Caco-2 (cell line): ENCODE measurements at regions of chr20 and their contacts with region 1.

Region 1: GRCh38 chr20:34363062-34363464 is at the start of gene ITCH:
- DNase-seq: peak; percentile 99
- H3K4me3 ChIP-seq: peak within 1 kb of the TSS; percentile 93
- H3K4me3 Mint-ChIP-seq: peak within 1 kb of the TSS; percentile 81
- H3K27ac Mint-ChIP-seq: peak within 1 kb of the TSS; percentile 96
- H3K4me1 ChIP-seq: peaks cover 26% of the 10 kb centered on the region
- H3K4me1 Mint-ChIP-seq: peaks cover 23% of the 10 kb centered on the region
- H3K27me3 ChIP-seq: no peaks in the 10 kb centered on the region
- H3K27me3 Mint-ChIP-seq: no peaks in the 10 kb centered on the region
- CTCF ChIP-seq: no peak
- total RNA-seq, gene ITCH: 135 and 138 TPM in 2 replicates

Region 2: DNA sequence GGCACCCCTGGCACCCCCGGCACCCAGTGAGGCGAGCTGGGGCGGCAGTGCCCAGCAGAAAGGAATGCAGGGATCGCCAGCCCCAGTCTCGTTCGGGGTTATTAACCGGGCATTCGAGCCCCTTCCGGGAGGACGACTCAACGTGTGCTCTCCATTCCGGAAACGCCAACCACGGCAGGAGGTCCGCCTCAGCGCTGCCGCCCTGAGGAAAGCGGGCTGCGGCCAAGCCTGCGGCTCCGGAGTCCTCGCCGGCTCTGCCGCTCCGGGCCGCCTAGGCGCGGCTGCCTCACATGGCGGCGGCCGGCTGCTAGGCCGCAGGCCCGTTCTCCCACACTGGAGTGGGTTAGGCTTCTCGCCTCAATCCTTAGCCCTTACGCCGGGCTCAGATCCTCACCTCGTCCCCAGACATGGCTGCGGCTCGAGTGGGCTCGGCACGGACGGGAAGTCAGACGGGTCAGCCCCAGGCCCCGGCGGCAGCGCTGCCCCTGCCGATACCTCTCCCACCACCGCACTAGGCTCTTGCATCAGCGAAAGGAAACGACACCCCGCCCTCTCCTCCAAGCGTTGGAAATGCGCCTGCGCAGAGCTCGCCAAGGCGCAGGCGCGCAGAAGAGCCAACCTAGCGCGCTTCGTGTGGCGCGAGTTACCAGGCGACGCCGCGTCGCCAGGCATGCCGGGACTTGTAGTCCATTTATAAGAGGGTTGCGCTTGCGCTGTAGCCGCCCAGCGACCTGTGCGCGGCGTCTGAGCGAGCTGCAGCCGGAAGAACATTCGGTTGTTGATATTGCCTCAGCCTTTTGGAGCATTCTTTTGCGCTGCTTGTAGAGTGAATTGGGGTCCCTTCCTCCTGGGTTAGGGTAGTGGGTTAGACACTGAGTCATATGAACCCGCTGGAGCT is 251.1 kb before region 1 on chr20 and contains the start of gene EIF2S2:
- CTCF ChIA-PET with region 1: no interaction called
- POLR2A ChIA-PET with region 1: interaction called, 14 read pairs
- intact Hi-C with region 1: no loop called
- DNase-seq: peak; percentile 100
- H3K4me3 ChIP-seq: peak within 1 kb of the TSS; percentile 98
- H3K4me3 Mint-ChIP-seq: peak within 1 kb of the TSS; percentile 77
- H3K27ac Mint-ChIP-seq: peak within 1 kb of the TSS; percentile 99
- H3K4me1 ChIP-seq: peaks cover 8% of the 10 kb centered on the region
- H3K4me1 Mint-ChIP-seq: peaks cover 37% of the 10 kb centered on the region
- H3K27me3 ChIP-seq: no peaks in the 10 kb centered on the region
- H3K27me3 Mint-ChIP-seq: no peaks in the 10 kb centered on the region
- CTCF ChIP-seq: no peak
- total RNA-seq, gene EIF2S2: 291 and 299 TPM in 2 replicates

Region 3: GRCh38 chr20:34302723-34303528 is 60.1 kb before region 1 on chr20 and contains the start of gene AHCY:
- CTCF ChIA-PET with region 1: interaction called, 4 read pairs
- POLR2A ChIA-PET with region 1: interaction called, 22 read pairs
- intact Hi-C with region 1: no loop called
- DNase-seq: peak; percentile 100
- H3K4me3 ChIP-seq: peak within 1 kb of the TSS; percentile 73
- H3K4me3 Mint-ChIP-seq: no peak within 1 kb of the TSS
- H3K27ac Mint-ChIP-seq: peak within 1 kb of the TSS; percentile 90
- H3K4me1 ChIP-seq: peaks cover 46% of the 10 kb centered on the region
- H3K4me1 Mint-ChIP-seq: peaks cover 15% of the 10 kb centered on the region
- H3K27me3 ChIP-seq: no peaks in the 10 kb centered on the region
- H3K27me3 Mint-ChIP-seq: no peaks in the 10 kb centered on the region
- CTCF ChIP-seq: no peak
- total RNA-seq, gene AHCY: 665 and 691 TPM in 2 replicates

Region 4: DNA sequence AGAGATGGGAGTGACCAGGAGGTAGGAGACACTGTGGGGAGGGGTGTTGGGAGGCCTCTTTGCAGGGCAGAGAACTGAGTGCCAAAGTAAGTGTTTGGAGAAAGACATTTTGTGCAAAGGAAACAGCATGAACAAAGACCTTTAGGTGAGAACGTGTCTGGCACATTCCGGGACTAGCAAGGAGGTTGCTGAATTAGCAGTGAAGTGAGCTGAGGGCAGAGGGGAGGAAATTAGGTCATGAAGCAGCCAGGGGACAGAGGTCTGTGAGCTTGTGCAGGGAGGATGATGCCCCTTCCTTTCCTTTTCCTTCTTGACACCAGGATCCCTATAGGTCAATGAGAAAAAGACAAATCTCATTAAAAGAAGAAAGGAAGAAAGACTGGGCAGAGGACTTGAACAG is 38.5 kb before region 1 on chr20:
- CTCF ChIA-PET with region 1: no interaction called
- POLR2A ChIA-PET with region 1: no interaction called
- intact Hi-C with region 1: no loop called
- DNase-seq: no peak
- H3K4me3 ChIP-seq: no peak overlapping the region
- H3K4me3 Mint-ChIP-seq: no peak overlapping the region
- H3K27ac Mint-ChIP-seq: no peak overlapping the region
- H3K4me1 ChIP-seq: peaks cover 7% of the 10 kb centered on the region
- H3K4me1 Mint-ChIP-seq: peaks cover under 1% of the 10 kb centered on the region
- H3K27me3 ChIP-seq: no peaks in the 10 kb centered on the region
- H3K27me3 Mint-ChIP-seq: no peaks in the 10 kb centered on the region
- CTCF ChIP-seq: no peak

Region 5: GRCh38 chr20:34343458-34344211 is 19.4 kb before region 1 on chr20:
- CTCF ChIA-PET with region 1: interaction called, 3 read pairs
- POLR2A ChIA-PET with region 1: interaction called, 13 read pairs
- intact Hi-C with region 1: no loop called
- DNase-seq: peak; percentile 55 to 80
- H3K4me3 ChIP-seq: no peak overlapping the region
- H3K4me3 Mint-ChIP-seq: peak overlapping the region; percentile 14
- H3K27ac Mint-ChIP-seq: peak overlapping the region; percentile 76
- H3K4me1 ChIP-seq: peaks cover 36% of the 10 kb centered on the region
- H3K4me1 Mint-ChIP-seq: peaks cover 18% of the 10 kb centered on the region
- H3K27me3 ChIP-seq: no peaks in the 10 kb centered on the region
- H3K27me3 Mint-ChIP-seq: no peaks in the 10 kb centered on the region
- CTCF ChIP-seq: no peak

Region 6: GRCh38 chr20:34377072-34377847 is 14.2 kb after region 1 on chr20:
- CTCF ChIA-PET with region 1: interaction called, 6 read pairs
- POLR2A ChIA-PET with region 1: interaction called, 39 read pairs
- intact Hi-C with region 1: no loop called
- DNase-seq: peak in 1 of 2 experiments; percentile 26
- H3K4me3 ChIP-seq: no peak overlapping the region
- H3K4me3 Mint-ChIP-seq: no peak overlapping the region
- H3K27ac Mint-ChIP-seq: peak overlapping the region; percentile 6
- H3K4me1 ChIP-seq: peaks cover 11% of the 10 kb centered on the region
- H3K4me1 Mint-ChIP-seq: peaks cover 20% of the 10 kb centered on the region
- H3K27me3 ChIP-seq: no peaks in the 10 kb centered on the region
- H3K27me3 Mint-ChIP-seq: no peaks in the 10 kb centered on the region
- CTCF ChIP-seq: no peak

Region 7: DNA sequence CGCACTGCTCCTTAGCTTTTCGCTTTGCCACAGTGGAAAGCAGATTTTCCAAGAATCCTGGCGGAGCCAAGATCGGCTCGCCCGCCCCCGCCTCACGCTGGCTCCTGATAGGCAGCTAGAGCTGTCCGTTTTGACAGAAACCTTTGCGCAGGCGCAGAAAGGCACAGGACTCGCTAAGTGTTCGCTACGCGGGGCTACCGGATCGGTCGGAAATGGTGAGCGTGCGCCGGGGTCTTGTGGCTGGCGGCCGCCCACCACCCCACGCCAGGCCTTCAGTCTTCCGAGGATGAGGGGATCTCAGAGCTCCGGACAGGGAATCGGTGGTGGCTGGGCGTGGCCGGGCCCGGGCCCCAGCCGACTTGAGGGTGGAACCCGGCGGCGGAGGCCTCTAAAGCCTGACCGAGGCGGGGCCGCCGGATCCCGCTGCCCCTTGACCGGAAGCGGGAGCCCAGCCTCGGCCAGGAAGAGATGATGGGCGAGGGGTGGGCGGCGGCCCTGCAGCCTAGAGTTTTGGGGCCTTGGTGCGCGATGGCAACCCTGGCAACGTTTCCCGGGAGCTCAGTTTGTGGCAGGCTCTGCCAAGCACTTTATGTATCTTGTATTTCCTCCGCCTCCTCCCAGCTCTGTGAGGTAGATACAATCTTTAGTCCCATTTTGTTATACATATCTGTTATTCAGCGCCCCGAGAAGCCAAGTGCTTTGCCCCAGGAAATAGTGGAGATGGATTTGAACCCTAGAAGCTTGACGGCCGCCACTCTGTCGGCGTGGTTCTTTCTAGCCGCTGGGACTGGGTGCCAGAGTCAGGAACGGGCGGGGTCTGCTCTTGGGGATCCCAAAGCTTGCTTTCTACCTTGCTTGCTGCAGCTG is 153.4 kb after region 1 on chr20 and contains the start of gene DYNLRB1:
- CTCF ChIA-PET with region 1: no interaction called
- POLR2A ChIA-PET with region 1: interaction called, 19 read pairs
- intact Hi-C with region 1: no loop called
- DNase-seq: peak; percentile 100
- H3K4me3 ChIP-seq: peak within 1 kb of the TSS; percentile 52
- H3K4me3 Mint-ChIP-seq: peak within 1 kb of the TSS; percentile 85
- H3K27ac Mint-ChIP-seq: peak within 1 kb of the TSS; percentile 91
- H3K4me1 ChIP-seq: peaks cover 6% of the 10 kb centered on the region
- H3K4me1 Mint-ChIP-seq: peaks cover 19% of the 10 kb centered on the region
- H3K27me3 ChIP-seq: no peaks in the 10 kb centered on the region
- H3K27me3 Mint-ChIP-seq: no peaks in the 10 kb centered on the region
- CTCF ChIP-seq: no peak
- total RNA-seq, gene DYNLRB1: 357 and 359 TPM in 2 replicates